ENCODE measurements at regions of chr17 and their contacts with region 1.

Region 1: GRCh38 chr17:37802712-37803416 is 58.0 kb upstream of the HNF1B start:
- DNase-seq: no peak
- H3K4me3 ChIP-seq: no peak overlapping the region
- CTCF ChIP-seq: no peak

Region 2: DNA sequence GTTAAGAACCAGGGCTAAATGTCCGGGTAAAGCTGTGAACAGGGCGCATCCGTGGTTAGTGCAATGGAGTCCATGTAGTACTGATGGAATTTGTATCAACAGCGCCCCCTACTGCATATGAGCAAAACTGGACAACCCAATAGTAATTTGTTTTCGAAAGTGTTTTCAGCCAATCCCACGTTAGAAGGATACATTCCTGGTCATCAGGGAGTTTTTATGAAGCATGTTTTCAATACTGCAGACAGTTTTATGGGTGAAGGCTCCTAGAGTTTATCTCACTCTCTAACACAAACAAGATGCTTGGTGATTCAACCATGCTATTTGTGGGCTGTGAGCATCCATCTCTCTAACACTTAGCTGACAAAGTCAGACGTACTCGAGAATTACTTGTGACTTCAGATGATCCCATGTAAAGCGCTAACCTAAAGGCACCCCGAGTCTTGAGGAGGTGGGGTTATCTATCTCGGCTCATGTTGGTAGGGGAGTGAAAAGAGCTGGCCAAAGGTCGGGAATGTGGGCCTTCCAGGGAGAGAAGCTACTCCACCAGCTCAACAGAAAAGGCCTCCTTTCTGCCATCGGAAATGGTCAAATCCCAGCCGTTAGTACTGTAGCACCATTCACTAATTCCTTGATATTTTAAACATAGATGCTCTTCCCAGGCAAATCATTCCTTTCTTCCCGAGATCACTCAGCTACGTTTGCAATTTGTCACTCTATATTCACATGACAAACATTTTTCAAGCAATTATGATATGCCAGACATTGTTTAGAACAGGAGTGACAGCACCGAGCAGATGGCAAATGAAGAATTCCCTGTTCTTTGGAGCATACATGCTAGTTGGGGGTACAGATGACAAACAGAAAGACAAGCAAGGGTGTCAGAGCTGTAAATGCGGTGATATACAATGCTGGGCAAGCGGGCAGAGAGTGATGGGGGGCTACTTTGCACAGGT is 11.1 kb before region 1 on chr17:
- CTCF ChIA-PET with region 1: interaction called, 13 read pairs
- POLR2A ChIA-PET with region 1: no interaction called
- DNase-seq: no peak
- H3K4me3 ChIP-seq: no peak overlapping the region
- CTCF ChIP-seq: no peak

Region 3: DNA sequence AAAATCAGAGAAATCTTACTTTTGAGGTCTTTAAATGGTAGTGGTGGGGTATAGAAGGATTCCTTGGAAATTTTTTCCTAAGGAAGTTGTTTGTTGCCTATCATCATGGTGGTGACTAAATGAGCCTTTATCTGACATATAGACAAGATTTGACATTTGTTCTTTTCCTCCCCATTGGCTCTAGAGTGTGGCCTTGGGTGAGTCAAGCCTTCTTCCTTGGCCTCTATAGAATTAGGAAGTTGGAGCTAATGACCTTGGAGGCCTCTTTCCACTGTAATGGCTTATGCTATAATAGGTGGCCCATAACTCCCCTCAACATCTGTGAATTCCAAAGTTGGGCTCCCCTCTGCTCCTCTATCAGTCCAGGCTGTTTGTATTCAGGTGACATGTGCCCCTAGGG is 21.1 kb after region 1 on chr17:
- CTCF ChIA-PET with region 1: no interaction called
- POLR2A ChIA-PET with region 1: no interaction called
- DNase-seq: no peak
- H3K4me3 ChIP-seq: no peak overlapping the region
- CTCF ChIP-seq: no peak